A673 (cell line): ENCODE measurements at regions of chr6 and their contacts with region 1.

Region 1: DNA sequence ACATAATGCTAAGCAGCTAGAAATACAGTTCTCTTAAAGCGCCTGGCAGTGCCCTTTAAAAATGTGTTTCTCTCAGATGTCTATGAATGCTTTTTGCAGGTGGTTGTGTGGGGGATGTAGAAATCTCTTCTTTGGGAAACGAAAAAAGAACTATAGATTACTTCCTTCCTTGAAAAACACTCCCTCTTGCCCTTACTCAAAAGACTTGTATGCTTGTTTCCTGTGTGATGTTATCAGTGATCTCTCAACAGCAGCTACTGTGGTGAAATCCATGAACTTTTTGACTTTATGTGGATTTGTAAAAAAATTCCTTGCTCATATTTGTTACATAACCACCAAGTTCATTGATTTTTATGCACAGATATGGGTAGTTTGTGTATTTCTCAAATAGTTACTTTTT is 916.5 kb downstream of the QKI start:
- DNase-seq: no peak
- H3K4me3 ChIP-seq: no peak overlapping the region
- H3K27ac ChIP-seq: no peak overlapping the region
- H3K4me1 ChIP-seq: no peaks in the 10 kb centered on the region
- H3K27me3 ChIP-seq: no peaks in the 10 kb centered on the region
- CTCF ChIP-seq: no peak

Region 2: GRCh38 chr6:163260111-163260895 is 1070.7 kb before region 1 on chr6:
- CTCF ChIA-PET with region 1: interaction called, 11 read pairs
- POLR2A ChIA-PET with region 1: no interaction called
- intact Hi-C with region 1: no loop called
- DNase-seq: peak; percentile 41
- H3K4me3 ChIP-seq: peak overlapping the region; percentile 3
- H3K27ac ChIP-seq: no peak overlapping the region
- H3K4me1 ChIP-seq: peaks cover 9% of the 10 kb centered on the region
- H3K27me3 ChIP-seq: no peaks in the 10 kb centered on the region
- CTCF ChIP-seq: no peak

Region 3: DNA sequence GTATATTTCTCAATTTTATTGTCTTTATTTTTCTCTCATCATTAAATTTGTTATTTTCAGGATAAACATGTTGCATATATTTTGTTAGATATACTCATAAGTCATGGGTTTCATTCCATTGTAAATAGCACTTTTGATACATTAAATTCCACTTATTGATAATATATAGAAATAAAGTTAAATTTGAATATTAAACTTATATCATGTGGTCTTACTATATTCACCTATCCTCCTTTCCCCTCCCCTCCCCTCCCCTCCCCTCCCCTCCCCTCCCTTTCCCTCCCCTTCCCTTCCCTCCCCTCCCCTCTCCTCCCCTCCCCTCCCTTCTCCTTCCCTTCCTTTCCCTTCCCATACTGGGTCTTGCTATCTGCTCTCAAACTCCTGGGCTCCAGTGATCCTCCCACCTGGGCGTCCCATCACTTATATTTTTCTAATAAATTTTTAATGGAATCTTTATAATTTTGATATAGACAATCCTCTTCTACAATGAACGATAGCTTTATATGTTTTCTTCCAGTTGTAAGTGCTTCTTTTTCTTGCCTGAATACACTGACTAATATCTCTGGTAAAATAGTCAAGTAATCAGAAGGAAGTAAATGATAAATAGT is 286.0 kb after region 1 on chr6:
- CTCF ChIA-PET with region 1: no interaction called
- POLR2A ChIA-PET with region 1: no interaction called
- intact Hi-C with region 1: no loop called
- DNase-seq: no peak
- H3K4me3 ChIP-seq: no peak overlapping the region
- H3K27ac ChIP-seq: no peak overlapping the region
- H3K4me1 ChIP-seq: no peaks in the 10 kb centered on the region
- H3K27me3 ChIP-seq: no peaks in the 10 kb centered on the region
- CTCF ChIP-seq: no peak